ENCODE measurements at regions of chr13 and their contacts with region 1.

Region 1: GRCh38 chr13:53090461-53090860 is 61.8 kb downstream of the OLFM4 start:
- DNase-seq: no peak
- H3K4me3 ChIP-seq: no peak overlapping the region
- H3K27ac ChIP-seq: no peak overlapping the region
- H3K4me1 ChIP-seq: no peaks in the 10 kb centered on the region
- H3K27me3 ChIP-seq: peaks cover 17% of the 10 kb centered on the region
- CTCF ChIP-seq: no peak

Region 2: GRCh38 chr13:53105890-53106289 is 15.4 kb after region 1 on chr13:
- CTCF ChIA-PET with region 1: no interaction called
- POLR2A ChIA-PET with region 1: no interaction called
- intact Hi-C with region 1: loop called (anchors 2 kb)
- DNase-seq: no peak
- H3K4me3 ChIP-seq: no peak overlapping the region
- H3K27ac ChIP-seq: no peak overlapping the region
- H3K4me1 ChIP-seq: no peaks in the 10 kb centered on the region
- H3K27me3 ChIP-seq: no peaks in the 10 kb centered on the region
- CTCF ChIP-seq: no peak

Region 3: GRCh38 chr13:53137779-53138178 is 47.3 kb after region 1 on chr13:
- CTCF ChIA-PET with region 1: no interaction called
- POLR2A ChIA-PET with region 1: no interaction called
- intact Hi-C with region 1: no loop called
- DNase-seq: peak; percentile 22
- H3K4me3 ChIP-seq: no peak overlapping the region
- H3K27ac ChIP-seq: no peak overlapping the region
- H3K4me1 ChIP-seq: peaks cover 4% of the 10 kb centered on the region
- H3K27me3 ChIP-seq: peaks cover 12% of the 10 kb centered on the region
- CTCF ChIP-seq: no peak

Measured in A673 (cell line).